Cardiac septum (tissue), 1 donor: ENCODE measurements at regions of chr9 and their contacts with region 1.

Region 1: DNA sequence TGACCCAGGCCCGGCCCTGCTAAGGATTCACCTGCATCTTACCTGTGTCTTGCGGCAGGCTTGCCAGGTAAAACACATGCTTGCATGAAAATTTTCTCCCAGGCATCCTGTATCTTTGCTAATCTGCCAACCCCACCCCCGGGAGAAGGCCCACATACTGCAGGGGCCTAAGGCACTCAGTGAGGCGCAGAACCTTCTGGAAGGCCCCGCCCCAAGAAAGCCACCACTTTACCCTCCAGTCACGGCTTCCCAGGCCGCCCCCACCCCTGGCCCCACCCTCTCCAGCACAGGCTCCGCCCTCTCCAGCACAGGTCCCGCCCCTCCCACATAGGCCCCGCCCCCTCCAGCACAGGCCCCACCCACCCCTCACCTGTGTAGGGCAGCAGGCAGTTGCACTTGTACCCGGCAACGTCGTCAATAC is 29.8 kb upstream of the SEC16A start:
- DNase-seq: no peak

Region 2: DNA sequence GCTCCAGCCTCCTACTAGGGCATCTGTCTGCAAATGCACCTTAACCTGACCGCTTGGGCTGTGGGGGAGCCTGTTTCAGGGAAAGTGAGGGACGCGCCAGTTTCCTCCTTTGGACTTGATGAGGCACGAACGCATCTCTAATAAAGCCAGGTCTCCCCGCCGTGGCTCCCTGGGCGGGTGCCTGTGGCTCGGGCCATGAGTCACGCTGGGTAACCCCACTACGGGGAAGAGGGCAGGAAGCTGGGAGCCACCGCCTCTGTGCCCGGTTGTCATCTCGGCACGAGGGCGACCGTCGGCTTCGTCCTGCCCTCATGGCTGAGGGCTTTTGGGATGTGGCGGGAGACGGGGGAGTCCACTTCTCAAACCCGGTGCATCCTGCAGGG is 21.1 kb after region 1 on chr9:
- intact Hi-C with region 1: loop called (anchors 2 kb)
- DNase-seq: peak; percentile 92